ENCODE measurements at regions of chr2 and their contacts with region 1.

Region 1: GRCh38 chr2:16281451-16282336 is 341.3 kb downstream of the MYCN start:
- DNase-seq: peak; percentile 39
- H3K4me3 Mint-ChIP-seq: no peak overlapping the region
- H3K27ac Mint-ChIP-seq: no peak overlapping the region
- H3K4me1 Mint-ChIP-seq: no peaks in the 10 kb centered on the region
- H3K27me3 Mint-ChIP-seq: no peaks in the 10 kb centered on the region
- CTCF ChIP-seq: peak; percentile 24

Region 2: GRCh38 chr2:16271231-16271896 is 10.3 kb before region 1 on chr2:
- CTCF ChIA-PET with region 1: interaction called, 18 read pairs
- POLR2A ChIA-PET with region 1: no interaction called
- intact Hi-C with region 1: no loop called
- DNase-seq: no peak
- H3K4me3 Mint-ChIP-seq: no peak overlapping the region
- H3K27ac Mint-ChIP-seq: no peak overlapping the region
- H3K4me1 Mint-ChIP-seq: no peaks in the 10 kb centered on the region
- H3K27me3 Mint-ChIP-seq: no peaks in the 10 kb centered on the region
- CTCF ChIP-seq: no peak

Region 3: GRCh38 chr2:16293398-16293797 is 11.7 kb after region 1 on chr2:
- CTCF ChIA-PET with region 1: interaction called, 14 read pairs
- POLR2A ChIA-PET with region 1: no interaction called
- intact Hi-C with region 1: no loop called
- DNase-seq: no peak
- H3K4me3 Mint-ChIP-seq: no peak overlapping the region
- H3K27ac Mint-ChIP-seq: no peak overlapping the region
- H3K4me1 Mint-ChIP-seq: no peaks in the 10 kb centered on the region
- H3K27me3 Mint-ChIP-seq: no peaks in the 10 kb centered on the region
- CTCF ChIP-seq: no peak

Region 4: DNA sequence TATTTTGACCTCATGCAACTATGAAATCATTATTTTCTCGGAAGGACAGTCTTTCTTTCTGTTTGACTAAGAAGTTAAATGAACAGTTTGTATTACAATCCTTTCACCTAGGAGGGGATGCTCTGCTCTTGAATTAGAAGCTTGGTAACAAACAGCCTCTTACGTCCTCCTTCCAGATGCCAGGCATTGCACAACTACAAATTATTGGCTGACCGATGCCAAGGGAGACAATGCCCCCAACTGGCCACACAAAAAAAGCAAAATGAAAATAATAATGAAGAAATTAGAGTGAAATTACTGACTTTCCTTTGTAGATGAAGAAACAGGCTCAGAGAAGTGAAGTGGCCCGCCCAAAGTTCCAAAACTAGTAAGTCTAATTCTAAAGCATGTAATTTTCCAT is 206.0 kb after region 1 on chr2:
- CTCF ChIA-PET with region 1: interaction called, 12 read pairs
- POLR2A ChIA-PET with region 1: no interaction called
- intact Hi-C with region 1: no loop called
- DNase-seq: peak; percentile 60
- H3K4me3 Mint-ChIP-seq: no peak overlapping the region
- H3K27ac Mint-ChIP-seq: no peak overlapping the region
- H3K4me1 Mint-ChIP-seq: no peaks in the 10 kb centered on the region
- H3K27me3 Mint-ChIP-seq: peaks cover 22% of the 10 kb centered on the region
- CTCF ChIP-seq: peak; percentile 42